Naive thymus-derived CD8-positive, alpha-beta T cell (primary cell): ENCODE measurements at regions of chr5 and their contacts with region 1.

Region 1: DNA sequence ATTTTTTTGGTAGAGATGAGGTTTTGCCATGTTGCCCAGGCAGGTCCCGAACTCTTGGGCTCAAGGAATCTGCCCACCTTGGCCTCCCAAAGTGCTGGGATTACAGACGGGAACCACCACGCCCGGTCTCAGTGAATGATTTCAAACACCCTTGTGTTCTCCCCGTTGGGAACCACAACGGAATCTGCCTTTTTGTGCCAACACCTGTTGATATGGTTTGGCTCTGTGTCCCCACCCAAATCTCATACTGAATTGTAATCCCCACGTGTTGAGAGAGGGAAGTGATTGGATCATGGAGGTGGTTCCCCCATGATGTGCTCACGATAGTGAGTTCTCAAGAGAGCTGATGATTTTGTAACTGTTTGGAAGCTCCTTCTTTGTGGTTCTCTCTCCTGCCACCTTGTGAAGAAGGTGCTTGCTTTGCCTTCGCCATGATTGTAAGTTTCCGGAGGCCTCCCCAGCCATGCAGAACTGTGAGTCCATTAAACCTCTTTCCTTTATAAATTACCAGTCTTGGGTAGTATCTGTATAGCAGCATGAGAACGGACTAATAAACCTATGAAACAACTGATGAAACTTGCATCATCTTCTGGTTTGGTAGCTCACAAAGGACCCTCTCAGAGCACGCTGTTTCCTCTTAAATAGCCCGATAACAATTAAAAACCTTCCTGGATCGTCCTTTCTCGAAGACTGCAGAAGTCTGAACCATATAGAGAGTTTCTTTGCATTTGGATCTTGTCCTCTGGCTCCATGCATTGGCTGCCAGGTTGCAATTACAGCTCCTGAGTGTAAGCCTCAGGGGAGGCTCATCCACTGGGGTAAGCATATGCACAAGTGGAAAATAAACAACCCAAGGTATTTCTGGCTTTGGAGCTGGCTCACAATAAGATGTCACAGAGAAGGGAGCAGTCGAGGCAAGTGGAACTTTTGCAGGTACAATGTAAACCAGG is 91.5 kb downstream of the SPRY4 start:
- DNase-seq: no peak
- ATAC-seq: no peak
- H3K4me3 Mint-ChIP-seq: no peak overlapping the region
- H3K27ac Mint-ChIP-seq: no peak overlapping the region
- H3K4me1 Mint-ChIP-seq: peaks cover 5 to 6% (median 5%) of the 10 kb centered on the region in 4 donors
- H3K27me3 Mint-ChIP-seq: peaks cover 0 to 8% (median 4%) of the 10 kb centered on the region in 5 donors

Region 2: DNA sequence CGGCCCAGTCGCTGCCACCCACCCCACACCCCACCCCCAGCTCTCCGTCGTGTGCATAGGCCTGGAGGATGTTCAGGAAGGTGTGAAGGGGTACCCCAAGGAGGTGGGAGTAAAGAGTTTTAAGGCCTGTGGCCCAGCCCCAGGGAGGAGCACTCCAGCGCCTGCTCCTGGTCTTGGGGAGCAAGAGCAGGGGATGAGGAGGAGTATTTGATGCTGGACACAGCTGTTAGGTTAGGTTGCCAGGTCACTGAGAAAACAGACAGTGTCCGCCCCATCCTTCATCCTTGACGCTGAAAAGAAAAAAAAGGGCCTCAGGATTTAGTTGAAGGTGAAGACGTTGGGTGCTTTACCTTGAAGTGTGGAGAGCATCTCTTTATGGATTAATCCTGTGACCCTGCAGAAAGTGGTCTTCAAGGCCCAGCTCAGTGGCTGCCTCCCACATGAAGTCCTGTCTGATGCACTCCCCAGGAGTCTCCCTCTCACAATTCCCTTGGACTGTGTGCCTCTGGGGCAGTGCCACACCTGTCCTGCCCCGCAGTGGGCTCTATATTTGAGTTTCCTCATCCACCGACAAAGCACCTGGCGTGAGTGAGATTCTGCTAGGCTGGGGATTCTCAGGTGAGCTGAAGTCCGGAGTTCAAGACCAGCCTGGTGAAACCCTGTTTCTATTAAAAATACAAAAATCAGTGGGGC is 10.3 kb before region 1 on chr5:
- POLR2A ChIA-PET with region 1: interaction called, 10 read pairs
- DNase-seq: no peak
- ATAC-seq: peak in 1 of 2 donors; percentile 2
- H3K4me3 Mint-ChIP-seq: peak overlapping the region; percentile 24 to 76 (median 54)
- H3K27ac Mint-ChIP-seq: peak overlapping the region; percentile 42 to 92 (median 84)
- H3K4me1 Mint-ChIP-seq: peaks cover 8 to 42% (median 36%) of the 10 kb centered on the region in 4 donors
- H3K27me3 Mint-ChIP-seq: peaks cover 2 to 22% (median 3%) of the 10 kb centered on the region in 5 donors